Activated CD4-positive, alpha-beta T cell treated with anti-CD3 and anti-CD28 coated beads for 36 hours (primary cell): ENCODE measurements at regions of chr12 and their contacts with region 1.

Region 1: DNA sequence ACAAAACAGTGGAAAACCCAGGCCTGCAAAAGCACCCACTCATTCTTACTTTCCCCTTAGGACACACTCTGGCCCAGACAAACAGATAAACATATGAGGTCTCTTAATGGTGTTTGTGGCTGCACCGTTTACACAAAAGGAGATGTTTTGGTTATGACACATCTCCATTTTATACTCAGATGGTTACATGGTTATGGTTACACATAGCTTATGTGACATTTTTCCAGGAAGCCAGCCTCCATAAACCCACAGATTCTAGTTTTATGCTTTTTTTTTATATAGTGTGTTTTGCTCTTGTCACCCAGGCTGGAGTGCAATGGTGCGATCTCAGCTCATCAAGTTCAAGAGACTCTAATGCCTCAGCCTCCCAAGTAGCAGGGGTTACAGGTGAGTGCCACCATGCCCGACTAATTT is 3.5 kb upstream of the KLRD1 start:
- DNase-seq: peak; percentile 64
- ATAC-seq: peak; percentile 86
- H3K4me3 Mint-ChIP-seq: no peak overlapping the region
- H3K27ac Mint-ChIP-seq: peak overlapping the region; percentile 19
- H3K4me1 Mint-ChIP-seq: peaks cover 47% of the 10 kb centered on the region
- H3K27me3 Mint-ChIP-seq: peaks cover 21% of the 10 kb centered on the region

Region 2: DNA sequence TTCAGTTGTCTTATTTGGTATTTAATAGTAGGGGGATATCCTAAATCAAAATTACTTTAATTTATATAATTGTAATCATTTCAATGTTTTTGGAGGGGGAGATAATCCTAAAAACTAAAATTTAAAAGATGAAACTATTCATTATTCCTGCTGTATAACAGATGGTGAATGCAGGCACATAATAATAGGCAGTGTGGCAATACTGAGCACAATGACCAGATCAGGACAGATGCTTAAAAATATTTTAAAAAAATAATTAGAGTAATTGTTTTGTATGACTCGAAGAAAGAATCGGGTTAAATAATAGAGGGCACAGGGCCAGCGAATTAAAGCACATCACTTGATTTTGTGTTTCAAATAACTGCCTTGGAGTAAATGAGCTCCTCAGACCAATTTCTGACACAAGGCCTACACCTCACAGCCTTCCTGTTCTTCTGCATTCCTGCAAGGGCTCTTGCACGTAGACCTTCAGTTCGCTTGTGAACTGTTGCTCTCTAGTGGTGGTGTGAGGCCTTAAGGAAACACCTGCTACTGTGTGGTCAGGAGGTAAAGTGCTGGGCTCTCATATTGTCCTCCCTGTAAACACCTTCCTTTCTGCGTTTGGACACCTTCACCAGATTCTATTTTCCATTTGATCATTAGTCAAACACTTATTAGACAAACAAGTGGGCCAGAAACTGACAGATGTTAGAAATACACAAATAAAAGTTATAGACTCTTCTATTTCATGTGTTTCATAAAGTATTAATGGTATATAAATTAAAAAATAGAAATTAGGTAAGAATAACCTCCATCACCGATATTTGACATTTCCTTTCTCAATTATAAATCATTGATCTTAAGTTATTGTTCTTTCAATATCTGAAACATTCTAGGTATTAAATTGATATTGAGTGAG is 506.2 kb before region 1 on chr12:
- CTCF ChIA-PET with region 1: no interaction called
- POLR2A ChIA-PET with region 1: no interaction called
- intact Hi-C with region 1: loop called in 1 of 2 experiments (anchors 1 kb)
- DNase-seq: peak; percentile 81
- ATAC-seq: peak; percentile 84
- H3K4me3 Mint-ChIP-seq: peak overlapping the region; percentile 72
- H3K27ac Mint-ChIP-seq: peak overlapping the region; percentile 92
- H3K4me1 Mint-ChIP-seq: peaks cover 42% of the 10 kb centered on the region
- H3K27me3 Mint-ChIP-seq: no peaks in the 10 kb centered on the region

Region 3: GRCh38 chr12:10082117-10082874 is 221.9 kb before region 1 on chr12:
- CTCF ChIA-PET with region 1: no interaction called
- POLR2A ChIA-PET with region 1: no interaction called
- intact Hi-C with region 1: no loop called
- DNase-seq: no peak
- ATAC-seq: no peak
- H3K4me3 Mint-ChIP-seq: no peak overlapping the region
- H3K27ac Mint-ChIP-seq: no peak overlapping the region
- H3K4me1 Mint-ChIP-seq: no peaks in the 10 kb centered on the region
- H3K27me3 Mint-ChIP-seq: peaks cover 8% of the 10 kb centered on the region

Region 4: GRCh38 chr12:10293570-10294227 is 10.5 kb before region 1 on chr12:
- CTCF ChIA-PET with region 1: no interaction called
- POLR2A ChIA-PET with region 1: interaction called, 4 read pairs
- intact Hi-C with region 1: loop called (anchors 1 kb)
- DNase-seq: no peak
- ATAC-seq: peak; percentile 54
- H3K4me3 Mint-ChIP-seq: no peak overlapping the region
- H3K27ac Mint-ChIP-seq: no peak overlapping the region
- H3K4me1 Mint-ChIP-seq: peaks cover 21% of the 10 kb centered on the region
- H3K27me3 Mint-ChIP-seq: peaks cover 5% of the 10 kb centered on the region

Region 5: DNA sequence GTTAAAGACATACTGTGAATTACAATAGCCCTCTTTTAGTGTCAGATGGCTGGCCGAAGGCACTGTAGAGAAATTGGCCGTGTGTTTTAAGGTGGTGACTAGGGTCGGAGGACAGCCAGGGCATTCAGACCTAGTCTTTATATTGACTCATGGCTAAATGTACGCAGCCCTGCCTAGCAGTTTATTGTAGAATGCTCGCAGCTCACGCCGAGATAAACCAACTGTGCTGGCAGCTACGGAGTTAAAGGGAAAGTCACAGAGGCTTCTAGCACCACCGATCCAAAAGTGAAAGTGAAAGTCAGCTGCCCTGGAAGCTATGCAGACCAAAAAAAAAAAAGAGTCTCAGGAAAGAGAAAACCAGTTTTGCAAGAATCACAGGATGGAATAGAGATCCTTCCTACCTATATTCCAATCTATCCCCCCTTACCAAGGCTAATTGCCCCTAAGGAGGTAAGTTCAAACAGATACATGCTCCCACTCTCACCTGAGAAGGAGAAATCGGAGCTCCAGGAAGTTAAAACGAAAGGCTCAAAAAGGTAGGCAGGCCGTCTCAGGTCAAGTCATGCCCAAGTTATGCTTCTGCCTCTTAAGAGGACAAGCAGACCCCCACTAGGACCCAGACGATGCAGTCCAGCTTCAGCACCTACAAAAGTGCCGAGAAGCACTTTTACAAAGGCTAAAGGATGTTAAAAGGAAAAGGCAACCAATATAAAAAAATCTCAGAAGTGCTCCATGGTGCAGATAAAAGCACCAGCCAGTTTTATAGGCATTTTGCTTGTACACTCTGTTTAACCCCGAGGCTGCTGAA is 60.9 kb after region 1 on chr12:
- CTCF ChIA-PET with region 1: no interaction called
- POLR2A ChIA-PET with region 1: no interaction called
- intact Hi-C with region 1: loop called in 1 of 2 experiments (anchors 1 kb)
- DNase-seq: peak; percentile 76
- ATAC-seq: peak; percentile 84
- H3K4me3 Mint-ChIP-seq: no peak overlapping the region
- H3K27ac Mint-ChIP-seq: no peak overlapping the region
- H3K4me1 Mint-ChIP-seq: peaks cover 3% of the 10 kb centered on the region
- H3K27me3 Mint-ChIP-seq: no peaks in the 10 kb centered on the region

Region 6: DNA sequence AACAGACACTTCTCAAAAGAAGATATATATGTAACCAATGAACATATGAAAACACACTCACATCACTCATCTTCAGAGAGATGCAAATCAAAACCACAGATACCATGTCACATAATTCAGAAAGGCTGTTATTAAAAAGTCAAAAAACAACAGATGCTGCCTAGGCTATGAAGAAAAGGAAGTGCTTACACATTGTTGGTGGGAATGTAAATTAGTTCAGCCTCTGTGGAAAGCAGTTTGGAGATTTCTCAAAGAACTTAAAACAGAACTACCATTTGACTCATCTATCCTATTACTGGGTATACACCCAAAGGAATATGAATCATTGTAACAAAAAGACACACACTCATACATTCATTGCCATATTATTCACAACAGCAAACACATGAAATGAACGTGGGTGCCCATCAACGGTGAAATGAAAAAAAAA is 236.6 kb after region 1 on chr12:
- CTCF ChIA-PET with region 1: no interaction called
- POLR2A ChIA-PET with region 1: no interaction called
- intact Hi-C with region 1: loop called (anchors 1 kb)
- DNase-seq: no peak
- ATAC-seq: peak; percentile 95
- H3K4me3 Mint-ChIP-seq: no peak overlapping the region
- H3K27ac Mint-ChIP-seq: peak overlapping the region; percentile 26
- H3K4me1 Mint-ChIP-seq: peaks cover 13% of the 10 kb centered on the region
- H3K27me3 Mint-ChIP-seq: peaks cover 42% of the 10 kb centered on the region

Region 7: GRCh38 chr12:10829994-10830393 is 525.8 kb after region 1 on chr12:
- CTCF ChIA-PET with region 1: no interaction called
- POLR2A ChIA-PET with region 1: no interaction called
- intact Hi-C with region 1: no loop called
- DNase-seq: no peak
- ATAC-seq: no peak
- H3K4me3 Mint-ChIP-seq: no peak overlapping the region
- H3K27ac Mint-ChIP-seq: no peak overlapping the region
- H3K4me1 Mint-ChIP-seq: no peaks in the 10 kb centered on the region
- H3K27me3 Mint-ChIP-seq: no peaks in the 10 kb centered on the region

Region 8: DNA sequence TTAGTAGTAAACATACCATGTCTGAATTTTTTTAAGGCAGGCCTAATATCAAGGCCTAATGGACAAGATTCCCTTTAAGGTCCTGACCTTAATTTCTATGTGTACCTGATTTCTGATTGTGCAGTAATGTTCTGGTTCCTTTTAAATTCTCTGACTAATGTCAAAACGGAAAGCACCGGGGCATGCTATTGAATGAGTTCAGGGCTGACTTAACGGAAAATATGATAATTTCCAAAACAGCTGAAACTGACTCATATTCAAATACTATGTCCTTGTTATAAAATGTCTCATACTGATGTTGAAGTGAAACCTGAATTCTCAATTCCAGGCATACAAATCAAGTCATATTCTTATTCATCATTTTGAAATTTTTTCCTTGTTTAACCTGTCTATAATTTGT is 781.3 kb after region 1 on chr12:
- CTCF ChIA-PET with region 1: no interaction called
- POLR2A ChIA-PET with region 1: no interaction called
- intact Hi-C with region 1: loop called in 1 of 2 experiments (anchors 10 kb)
- DNase-seq: peak; percentile 57
- ATAC-seq: peak; percentile 90
- H3K4me3 Mint-ChIP-seq: no peak overlapping the region
- H3K27ac Mint-ChIP-seq: peak overlapping the region; percentile 31
- H3K4me1 Mint-ChIP-seq: peaks cover 13% of the 10 kb centered on the region
- H3K27me3 Mint-ChIP-seq: no peaks in the 10 kb centered on the region